Activated CD4-positive, alpha-beta T cell treated with anti-CD3 and anti-CD28 coated beads, Interleukin-2, amount 10 ng/mL, durations not matched to agents 24 days and 14 days (primary cell): ENCODE measurements at regions of chr12 and their contacts with region 1.

Region 1: GRCh38 chr12:122526683-122527477 is at the starts of genes KNTC1 and RSRC2:
- DNase-seq: peak; percentile 99
- H3K4me3 Mint-ChIP-seq: no peak within 1 kb of the TSS
- H3K27ac Mint-ChIP-seq: no peak within 1 kb of the TSS
- H3K4me1 Mint-ChIP-seq: peaks cover 36% of the 10 kb centered on the region
- H3K27me3 Mint-ChIP-seq: no peaks in the 10 kb centered on the region
- total RNA-seq, gene KNTC1: 128 and 129 TPM in 2 replicates
- total RNA-seq, gene RSRC2: 99.7 and 101 TPM in 2 replicates

Region 2: GRCh38 chr12:122225683-122226407 is 301.0 kb before region 1 on chr12 and contains the start of gene DIABLO:
- intact Hi-C with region 1: loop called (anchors 10 kb)
- DNase-seq: peak; percentile 100
- H3K4me3 Mint-ChIP-seq: peak within 1 kb of the TSS; percentile 95
- H3K27ac Mint-ChIP-seq: peak within 1 kb of the TSS; percentile 94
- H3K4me1 Mint-ChIP-seq: peaks cover 31% of the 10 kb centered on the region
- H3K27me3 Mint-ChIP-seq: no peaks in the 10 kb centered on the region
- total RNA-seq, gene DIABLO: 59.4 and 61.0 TPM in 2 replicates

Region 3: DNA sequence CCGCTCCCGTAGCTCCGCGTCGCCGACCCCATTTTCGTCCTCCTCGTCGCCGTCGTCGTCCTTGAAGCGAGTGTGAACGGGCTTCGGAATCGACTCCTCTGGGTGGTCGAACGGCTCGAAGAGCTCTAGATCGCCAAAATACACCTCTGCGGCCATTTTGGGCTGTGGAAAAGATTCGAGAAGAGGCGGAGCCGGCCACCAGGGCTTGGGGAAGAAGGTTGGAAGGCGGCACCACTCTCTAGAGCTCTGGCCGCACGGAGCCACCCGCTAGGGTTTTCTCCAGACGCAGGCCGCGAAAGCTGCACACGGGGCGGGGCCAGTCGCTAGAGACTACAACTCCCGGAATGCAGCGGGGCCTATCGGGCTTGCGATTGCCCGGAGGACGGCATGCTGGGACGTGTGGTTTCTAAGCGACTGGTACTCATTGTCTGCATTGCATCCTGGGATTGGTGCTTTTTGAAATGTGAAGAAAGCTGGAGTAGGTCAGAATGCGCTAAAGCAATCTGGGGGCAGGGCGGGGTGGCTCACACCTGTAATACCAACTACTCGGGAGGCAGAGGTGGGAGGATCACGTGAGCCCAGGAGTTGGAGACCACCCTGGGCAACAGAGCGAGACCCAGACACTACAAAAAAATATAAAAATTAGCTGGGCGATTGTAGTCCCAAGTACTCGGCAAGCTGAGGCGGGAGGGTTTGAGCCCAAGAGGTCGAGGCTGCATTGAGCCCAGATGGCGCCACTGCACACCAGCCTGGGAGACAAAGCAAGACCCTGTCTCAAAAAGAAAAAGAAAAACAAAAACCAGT is 26.0 kb before region 1 on chr12 and contains the start of gene ZCCHC8:
- intact Hi-C with region 1: loop called (anchors 1 kb)
- DNase-seq: peak; percentile 99
- H3K4me3 Mint-ChIP-seq: peak within 1 kb of the TSS; percentile 97
- H3K27ac Mint-ChIP-seq: peak within 1 kb of the TSS; percentile 99
- H3K4me1 Mint-ChIP-seq: peaks cover 29% of the 10 kb centered on the region
- H3K27me3 Mint-ChIP-seq: no peaks in the 10 kb centered on the region
- total RNA-seq, gene ZCCHC8: 41.4 and 41.9 TPM in 2 replicates

Region 4: GRCh38 chr12:122974274-122974891 is 447.5 kb after region 1 on chr12:
- intact Hi-C with region 1: loop called (anchors 10 kb)
- DNase-seq: peak; percentile 100
- H3K4me3 Mint-ChIP-seq: peak overlapping the region; percentile 94
- H3K27ac Mint-ChIP-seq: peak overlapping the region; percentile 99
- H3K4me1 Mint-ChIP-seq: peaks cover 19% of the 10 kb centered on the region
- H3K27me3 Mint-ChIP-seq: no peaks in the 10 kb centered on the region